ENCODE measurements at regions of chr17 and their contacts with region 1.

Region 1: GRCh38 chr17:4796553-4796921 is 573 bp downstream of the PSMB6 start:
- DNase-seq: peak; percentile 44
- H3K4me3 Mint-ChIP-seq: peak overlapping the region; percentile 99
- H3K27ac Mint-ChIP-seq: peak overlapping the region; percentile 92
- H3K4me1 Mint-ChIP-seq: peaks cover 18% of the 10 kb centered on the region
- H3K27me3 Mint-ChIP-seq: no peaks in the 10 kb centered on the region

Region 2: GRCh38 chr17:4329838-4330237 is 466.7 kb before region 1 on chr17:
- CTCF ChIA-PET with region 1: no interaction called
- POLR2A ChIA-PET with region 1: no interaction called
- intact Hi-C with region 1: no loop called
- DNase-seq: no peak
- H3K4me3 Mint-ChIP-seq: no peak overlapping the region
- H3K27ac Mint-ChIP-seq: no peak overlapping the region
- H3K4me1 Mint-ChIP-seq: peaks cover 60% of the 10 kb centered on the region
- H3K27me3 Mint-ChIP-seq: no peaks in the 10 kb centered on the region

Region 3: DNA sequence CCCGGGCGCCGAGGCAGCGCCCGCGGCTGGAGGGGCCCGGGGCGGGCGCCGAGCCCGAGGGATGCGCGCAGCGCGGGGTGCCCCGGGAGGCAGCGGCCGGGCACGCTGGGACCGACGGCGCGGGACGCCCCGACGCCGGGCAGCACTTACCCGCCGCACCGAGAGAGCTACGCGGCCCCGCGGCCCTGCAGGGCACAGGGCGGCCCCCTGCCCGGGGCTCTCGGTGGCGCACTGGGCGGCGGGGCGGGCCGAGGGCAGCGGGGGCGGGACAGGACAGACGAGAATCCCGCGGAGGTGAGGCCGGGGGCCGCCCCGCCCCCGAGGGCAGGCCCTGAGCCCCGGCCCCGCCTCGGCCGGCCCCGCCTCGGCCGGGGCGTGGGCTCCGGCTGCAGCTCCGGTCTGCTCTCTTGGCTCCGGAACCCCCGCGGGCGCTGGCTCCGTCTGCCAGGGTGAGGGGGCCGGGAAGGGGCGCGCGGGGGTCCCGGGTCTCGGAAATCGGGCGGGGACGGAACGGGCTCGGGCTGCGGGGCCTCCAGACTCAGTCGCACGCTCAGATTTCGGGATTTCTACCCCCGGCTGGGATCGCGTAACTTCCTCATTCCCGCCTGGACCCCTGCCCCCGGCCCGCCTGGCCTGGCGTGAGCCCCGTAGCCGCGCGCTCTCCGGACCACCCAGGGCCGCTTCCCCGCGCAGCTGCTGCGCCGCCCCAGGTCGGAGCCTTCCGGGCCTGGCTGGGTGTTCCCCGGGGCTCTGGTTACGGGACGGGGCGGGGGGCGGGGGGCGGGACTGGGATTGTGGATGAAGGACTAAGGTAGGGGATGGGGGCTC is 10.5 kb after region 1 on chr17 and contains the start of gene PLD2:
- CTCF ChIA-PET with region 1: no interaction called
- POLR2A ChIA-PET with region 1: interaction called, 6 read pairs
- intact Hi-C with region 1: loop called (anchors 1 kb)
- DNase-seq: peak; percentile 92
- H3K4me3 Mint-ChIP-seq: peak within 1 kb of the TSS; percentile 74
- H3K27ac Mint-ChIP-seq: no peak within 1 kb of the TSS
- H3K4me1 Mint-ChIP-seq: peaks cover 14% of the 10 kb centered on the region
- H3K27me3 Mint-ChIP-seq: no peaks in the 10 kb centered on the region
- total RNA-seq, gene PLD2: 15.8 to 19.3 TPM

Region 4: DNA sequence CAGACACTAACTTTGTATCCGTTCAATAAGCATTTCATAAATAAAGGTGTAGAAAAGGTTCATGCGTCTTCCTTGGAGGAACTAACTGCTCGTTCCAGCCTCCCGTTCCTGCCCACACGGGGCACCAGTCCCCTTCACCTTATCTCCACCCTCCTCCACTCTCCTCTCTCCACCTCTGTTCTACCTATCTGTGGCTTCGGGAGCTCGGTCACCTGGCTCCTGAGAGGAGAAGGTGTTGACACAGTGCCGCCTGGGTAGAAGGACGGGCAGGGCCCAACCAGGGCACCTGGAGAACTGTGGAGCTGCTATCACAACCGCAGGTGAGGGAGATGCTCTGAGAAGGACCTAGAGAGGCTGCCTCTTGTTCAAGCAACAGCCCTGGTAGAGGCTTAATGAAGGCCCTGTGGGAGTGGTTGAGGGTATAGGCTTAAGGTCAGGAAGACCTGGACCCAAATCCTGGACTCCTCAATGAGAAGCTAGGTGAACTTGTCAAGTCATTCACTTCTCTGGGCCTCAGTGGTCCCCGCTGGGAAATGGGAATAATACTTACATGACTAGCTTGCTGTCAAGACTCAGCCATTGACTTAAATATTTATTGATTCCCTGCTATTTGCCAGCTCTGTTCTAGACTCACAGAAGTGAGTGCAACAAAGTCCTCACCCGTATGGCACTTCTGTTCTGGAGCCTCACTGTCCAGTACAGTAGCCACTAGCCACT is 27.0 kb after region 1 on chr17:
- CTCF ChIA-PET with region 1: no interaction called
- POLR2A ChIA-PET with region 1: no interaction called
- intact Hi-C with region 1: no loop called
- DNase-seq: no peak
- H3K4me3 Mint-ChIP-seq: no peak overlapping the region
- H3K27ac Mint-ChIP-seq: no peak overlapping the region
- H3K4me1 Mint-ChIP-seq: no peaks in the 10 kb centered on the region
- H3K27me3 Mint-ChIP-seq: no peaks in the 10 kb centered on the region